GM10248 (cell line): ENCODE measurements at regions of chr12 and their contacts with region 1.

Region 1: GRCh38 chr12:44379831-44380230 is 496.3 kb downstream of the NELL2 start:
- DNase-seq: no peak
- CTCF ChIP-seq: no peak

Region 2: DNA sequence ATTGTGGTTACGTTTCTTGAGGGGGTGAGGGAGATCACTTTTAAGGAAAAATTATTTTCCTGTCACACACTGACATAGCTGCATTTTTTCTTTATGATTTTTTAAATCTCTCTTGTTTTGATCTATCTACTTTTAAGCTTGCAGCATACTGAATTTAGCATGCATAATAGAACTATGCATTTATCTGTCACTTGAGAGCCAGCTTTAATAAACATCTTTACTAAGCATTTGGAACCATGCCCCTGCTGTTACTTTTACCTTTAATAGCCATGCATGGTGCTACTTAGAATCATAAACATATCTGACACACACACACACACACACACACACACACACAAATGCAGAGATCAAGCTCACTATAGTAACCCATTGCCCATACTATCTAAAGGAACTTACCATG is 10.1 kb after region 1 on chr12:
- CTCF ChIA-PET with region 1: interaction called, 16 read pairs
- POLR2A ChIA-PET with region 1: no interaction called
- DNase-seq: no peak
- CTCF ChIP-seq: no peak

Region 3: GRCh38 chr12:44405297-44405696 is 25.5 kb after region 1 on chr12:
- CTCF ChIA-PET with region 1: no interaction called
- POLR2A ChIA-PET with region 1: no interaction called
- DNase-seq: no peak
- CTCF ChIP-seq: no peak